Activated CD4-positive, alpha-beta T cell treated with anti-CD3 and anti-CD28 coated beads for 36 hours (primary cell): ENCODE measurements at regions of chr22 and their contacts with region 1.

Region 1: GRCh38 chr22:22463855-22464540 is 44.5 kb downstream of the ZNF280B start:
- DNase-seq: peak; percentile 71
- ATAC-seq: no peak
- H3K4me3 Mint-ChIP-seq: no peak overlapping the region
- H3K27ac Mint-ChIP-seq: no peak overlapping the region
- H3K4me1 Mint-ChIP-seq: no peaks in the 10 kb centered on the region
- H3K27me3 Mint-ChIP-seq: peaks cover 33% of the 10 kb centered on the region

Region 2: GRCh38 chr22:22210375-22210774 is 253.6 kb before region 1 on chr22:
- CTCF ChIA-PET with region 1: no interaction called
- POLR2A ChIA-PET with region 1: no interaction called
- intact Hi-C with region 1: no loop called
- DNase-seq: peak; percentile 84
- ATAC-seq: peak; percentile 92
- H3K4me3 Mint-ChIP-seq: peak overlapping the region; percentile 36
- H3K27ac Mint-ChIP-seq: peak overlapping the region; percentile 97
- H3K4me1 Mint-ChIP-seq: peaks cover 38% of the 10 kb centered on the region
- H3K27me3 Mint-ChIP-seq: no peaks in the 10 kb centered on the region

Region 3: DNA sequence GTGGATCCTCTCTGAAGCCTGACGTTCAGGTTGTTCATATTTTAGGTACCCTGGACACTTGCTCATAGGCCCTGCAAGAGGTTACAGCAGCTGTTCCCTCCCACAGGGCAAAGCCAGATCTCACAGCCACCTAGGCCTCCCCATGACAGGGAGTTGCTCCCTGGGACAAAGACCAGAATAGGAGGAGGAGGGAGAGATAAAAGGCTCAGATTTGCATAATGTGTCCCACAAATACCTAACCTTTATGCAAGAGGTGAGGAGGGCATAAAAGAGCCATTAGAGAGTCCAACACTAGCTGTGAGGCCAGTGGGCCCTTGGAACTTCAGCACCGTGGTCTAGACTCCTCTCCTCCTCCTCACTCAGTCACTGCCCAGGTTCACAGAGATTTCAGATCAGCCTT is 10.7 kb after region 1 on chr22:
- CTCF ChIA-PET with region 1: interaction called, 13 read pairs
- POLR2A ChIA-PET with region 1: no interaction called
- intact Hi-C with region 1: no loop called
- DNase-seq: no peak
- ATAC-seq: no peak
- H3K4me3 Mint-ChIP-seq: no peak overlapping the region
- H3K27ac Mint-ChIP-seq: no peak overlapping the region
- H3K4me1 Mint-ChIP-seq: no peaks in the 10 kb centered on the region
- H3K27me3 Mint-ChIP-seq: peaks cover 2% of the 10 kb centered on the region

Region 4: DNA sequence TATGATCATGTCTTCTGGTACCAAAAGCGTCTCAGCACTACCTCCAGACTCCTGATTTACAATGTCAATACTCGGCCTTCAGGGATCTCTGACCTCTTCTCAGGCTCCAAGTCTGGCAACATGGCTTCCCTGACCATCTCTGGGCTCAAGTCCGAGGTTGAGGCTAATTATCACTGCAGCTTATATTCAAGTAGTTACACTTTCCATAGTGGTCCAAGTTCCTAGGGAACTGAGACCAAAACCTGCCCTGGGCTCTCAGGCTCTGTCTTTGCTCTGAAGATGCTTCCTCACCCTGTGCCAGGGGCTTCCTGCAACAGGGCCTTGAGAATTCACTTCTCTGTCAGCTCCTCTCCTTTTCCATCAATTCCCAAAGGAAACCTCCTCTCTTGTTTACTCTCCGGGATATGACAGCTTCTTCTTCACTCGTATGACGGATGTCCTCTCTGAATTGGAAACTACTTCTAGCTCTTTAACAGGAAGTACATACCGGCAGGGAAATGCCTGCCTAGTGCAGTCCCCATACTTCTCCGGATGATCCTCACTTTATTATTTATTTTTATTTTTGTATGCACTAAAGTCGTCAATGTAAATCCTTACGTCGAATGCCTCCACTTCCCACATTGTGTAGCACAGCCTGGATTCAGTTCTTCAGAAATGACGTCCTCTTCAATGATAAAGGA is 124.6 kb after region 1 on chr22:
- CTCF ChIA-PET with region 1: interaction called, 12 read pairs
- POLR2A ChIA-PET with region 1: interaction called, 3 read pairs
- intact Hi-C with region 1: loop called (anchors 2 to 5 kb)
- DNase-seq: no peak
- ATAC-seq: no peak
- H3K4me3 Mint-ChIP-seq: no peak overlapping the region
- H3K27ac Mint-ChIP-seq: no peak overlapping the region
- H3K4me1 Mint-ChIP-seq: no peaks in the 10 kb centered on the region
- H3K27me3 Mint-ChIP-seq: peaks cover 10% of the 10 kb centered on the region

Region 5: DNA sequence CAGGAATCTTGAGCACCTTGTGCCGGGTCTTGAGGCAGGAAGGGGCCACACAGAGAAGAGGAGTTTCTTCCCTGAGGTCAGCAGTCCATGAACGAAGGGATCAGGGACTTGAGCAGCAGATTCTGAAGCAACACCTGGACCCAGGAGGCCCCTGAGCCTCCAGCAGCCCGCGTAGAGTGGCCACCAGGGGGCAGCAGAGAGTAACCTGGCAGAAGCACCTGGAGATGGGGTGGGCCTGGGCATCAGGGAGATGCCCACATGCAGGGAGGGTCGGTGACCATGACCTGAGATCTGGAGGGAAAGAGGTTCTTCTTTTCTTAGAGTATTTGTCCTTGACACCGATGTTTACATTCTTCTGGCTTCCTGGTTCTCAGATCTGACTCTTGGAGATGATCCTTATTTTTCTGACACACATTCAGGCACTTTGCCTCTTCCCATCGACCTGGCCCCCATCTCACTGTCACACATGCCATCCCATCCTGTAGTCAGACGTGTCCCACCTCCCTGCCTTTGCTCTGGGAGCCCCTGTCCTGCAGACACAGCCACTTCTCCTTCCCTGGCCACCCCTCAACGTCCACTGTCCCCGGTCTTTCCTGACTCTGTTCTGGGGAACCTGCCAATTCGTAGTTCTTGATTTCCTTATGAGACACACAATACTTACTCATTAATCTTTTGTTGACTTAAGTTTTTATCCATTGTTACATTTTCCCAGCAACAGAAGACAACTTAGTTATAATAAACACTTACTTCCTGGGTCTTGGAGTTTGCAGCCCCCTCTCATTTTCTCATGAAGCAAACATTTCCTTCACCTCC is 246.9 kb after region 1 on chr22:
- CTCF ChIA-PET with region 1: interaction called, 4 read pairs
- POLR2A ChIA-PET with region 1: no interaction called
- intact Hi-C with region 1: loop called in 1 of 2 experiments (anchors 1 kb)
- DNase-seq: peak; percentile 86
- ATAC-seq: peak; percentile 58
- H3K4me3 Mint-ChIP-seq: no peak overlapping the region
- H3K27ac Mint-ChIP-seq: no peak overlapping the region
- H3K4me1 Mint-ChIP-seq: no peaks in the 10 kb centered on the region
- H3K27me3 Mint-ChIP-seq: no peaks in the 10 kb centered on the region